Heart left ventricle (tissue), 16 donors: ENCODE measurements at regions of chr4 and their contacts with region 1.

Region 1: DNA sequence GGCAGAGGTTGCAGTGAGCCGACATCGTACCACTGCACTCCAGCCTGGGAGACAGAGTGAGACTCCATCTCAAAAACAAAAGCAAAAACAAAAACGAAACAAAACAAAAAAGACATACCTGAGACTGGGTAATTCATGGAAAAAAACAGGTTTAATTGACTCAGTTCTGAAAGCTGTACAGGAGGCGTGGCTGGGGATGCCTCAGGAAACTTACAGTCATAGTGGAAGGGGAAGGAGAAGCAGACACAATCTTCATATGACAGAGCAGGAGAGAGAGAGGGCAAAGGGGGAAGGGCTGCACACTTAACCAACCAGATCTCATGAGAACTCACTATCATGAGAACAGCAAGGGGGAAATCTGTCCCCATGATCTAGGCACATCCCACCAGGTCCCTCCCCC is 229.5 kb downstream of the STK32B start:
- DNase-seq: no peak
- ATAC-seq: no peak
- H3K4me3 ChIP-seq: no peak overlapping the region
- H3K27ac ChIP-seq: no peak overlapping the region
- H3K4me1 ChIP-seq: no peaks in the 10 kb centered on the region
- H3K27me3 ChIP-seq: peaks cover 0 to 2% (median 0%) of the 10 kb centered on the region in 9 donors
- CTCF ChIP-seq: no peak
- POLR2A ChIP-seq: no peak

Region 2: GRCh38 chr4:5037553-5038551 is 243.0 kb before region 1 on chr4:
- intact Hi-C with region 1: no loop called
- DNase-seq: no peak
- ATAC-seq: peak in 2 of 4 donors; percentile 65 to 76
- H3K4me3 ChIP-seq: no peak overlapping the region
- H3K27ac ChIP-seq: peak overlapping the region in 1 of 12 donors; percentile 32
- H3K4me1 ChIP-seq: peaks cover 0 to 40% (median 8%) of the 10 kb centered on the region in 12 donors
- H3K27me3 ChIP-seq: peaks cover 0 to 10% (median 0%) of the 10 kb centered on the region in 9 donors
- CTCF ChIP-seq: no peak
- POLR2A ChIP-seq: no peak

Region 3: GRCh38 chr4:5322321-5322720 is 41.5 kb after region 1 on chr4:
- intact Hi-C with region 1: loop called in 1 of 10 experiments (anchors 5 kb)
- DNase-seq: no peak
- ATAC-seq: no peak
- H3K4me3 ChIP-seq: no peak overlapping the region
- H3K27ac ChIP-seq: no peak overlapping the region
- H3K4me1 ChIP-seq: no peaks in the 10 kb centered on the region
- H3K27me3 ChIP-seq: no peaks in the 10 kb centered on the region
- CTCF ChIP-seq: no peak
- POLR2A ChIP-seq: no peak